Vagina (tissue), 2 donors: ENCODE measurements at regions of chr6 and their contacts with region 1.

Region 1: DNA sequence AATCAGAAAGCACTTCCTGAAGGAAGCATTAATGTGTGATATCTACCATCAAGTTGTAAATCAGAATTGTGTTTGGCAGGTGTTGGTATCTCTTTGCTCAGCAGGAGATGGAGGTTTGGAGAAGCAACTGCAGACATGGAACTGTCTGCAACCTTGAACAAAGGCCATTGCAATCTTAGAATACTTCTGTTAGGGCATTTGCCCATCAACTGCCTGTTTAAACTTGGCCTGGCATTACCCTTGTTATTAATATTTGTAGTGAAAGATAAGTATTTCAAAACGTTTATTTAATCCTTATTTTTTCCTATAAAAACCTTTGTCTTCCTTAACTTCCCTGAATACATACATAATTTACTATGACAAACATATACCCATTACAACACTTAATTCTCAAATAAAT is 14.1 kb downstream of the GSTA5 start:
- DNase-seq: no peak
- H3K4me3 ChIP-seq: no peak overlapping the region
- H3K27ac ChIP-seq: no peak overlapping the region
- H3K4me1 ChIP-seq: no peaks in the 10 kb centered on the region
- H3K27me3 ChIP-seq: no peaks in the 10 kb centered on the region
- CTCF ChIP-seq: no peak
- POLR2A ChIP-seq: no peak

Region 2: DNA sequence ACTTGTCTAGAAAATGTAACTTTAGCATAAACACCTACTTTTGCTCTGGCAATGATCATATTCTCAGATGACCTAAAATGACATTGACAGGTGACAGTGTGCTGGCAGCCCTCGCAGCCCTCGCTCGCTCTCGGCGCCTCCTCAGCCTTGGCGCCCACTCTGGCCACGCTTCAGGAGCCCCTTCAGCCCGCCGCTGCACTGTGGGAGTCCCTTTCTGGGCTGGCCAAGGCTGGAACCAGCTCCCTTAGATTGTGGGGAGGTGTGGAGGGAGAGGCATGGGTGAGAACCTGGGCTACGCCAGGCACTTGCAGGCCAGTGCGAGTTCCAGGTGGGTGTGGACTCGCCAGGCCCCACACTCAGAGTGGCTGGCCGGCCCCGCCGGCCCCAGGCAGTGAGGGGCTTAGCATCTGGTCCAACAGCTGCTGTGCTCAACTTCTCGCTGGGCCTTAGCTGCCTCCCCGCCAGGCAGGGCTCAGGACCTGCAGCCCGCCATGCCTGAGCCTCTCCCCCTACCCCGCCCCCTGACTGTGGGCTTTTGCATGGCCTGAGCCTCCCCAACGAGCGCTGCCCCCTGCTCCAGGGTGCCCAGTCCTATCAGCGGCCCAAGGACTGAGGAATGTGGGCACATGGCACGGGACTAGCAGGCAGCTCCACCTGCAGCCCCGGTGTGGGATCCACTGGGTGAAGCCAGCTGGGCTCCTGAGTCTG is 40.1 kb before region 1 on chr6:
- intact Hi-C with region 1: loop called (anchors 1 kb)
- DNase-seq: no peak
- H3K4me3 ChIP-seq: no peak overlapping the region
- H3K27ac ChIP-seq: no peak overlapping the region
- H3K4me1 ChIP-seq: no peaks in the 10 kb centered on the region
- H3K27me3 ChIP-seq: no peaks in the 10 kb centered on the region
- CTCF ChIP-seq: no peak
- POLR2A ChIP-seq: no peak